Activated CD8-positive, alpha-beta T cell treated with anti-CD3 and anti-CD28 coated beads, Interleukin-2, amount 10 ng/mL, durations not matched to agents 7 days and 5 days (primary cell): ENCODE measurements at regions of chr6 and their contacts with region 1.

Region 1: GRCh38 chr6:160137989-160138835 is 16.6 kb downstream of the SLC22A1 start:
- DNase-seq: peak; percentile 79
- ATAC-seq: peak; percentile 58
- H3K4me3 Mint-ChIP-seq: no peak overlapping the region
- H3K27ac Mint-ChIP-seq: no peak overlapping the region
- H3K4me1 Mint-ChIP-seq: peaks cover 5% of the 10 kb centered on the region
- H3K27me3 Mint-ChIP-seq: peaks cover 2% of the 10 kb centered on the region

Region 2: GRCh38 chr6:160095146-160095845 is 42.9 kb before region 1 on chr6:
- CTCF ChIA-PET with region 1: no interaction called
- POLR2A ChIA-PET with region 1: no interaction called
- DNase-seq: no peak
- ATAC-seq: no peak
- H3K4me3 Mint-ChIP-seq: no peak overlapping the region
- H3K27ac Mint-ChIP-seq: no peak overlapping the region
- H3K4me1 Mint-ChIP-seq: peaks cover 15% of the 10 kb centered on the region
- H3K27me3 Mint-ChIP-seq: no peaks in the 10 kb centered on the region

Region 3: DNA sequence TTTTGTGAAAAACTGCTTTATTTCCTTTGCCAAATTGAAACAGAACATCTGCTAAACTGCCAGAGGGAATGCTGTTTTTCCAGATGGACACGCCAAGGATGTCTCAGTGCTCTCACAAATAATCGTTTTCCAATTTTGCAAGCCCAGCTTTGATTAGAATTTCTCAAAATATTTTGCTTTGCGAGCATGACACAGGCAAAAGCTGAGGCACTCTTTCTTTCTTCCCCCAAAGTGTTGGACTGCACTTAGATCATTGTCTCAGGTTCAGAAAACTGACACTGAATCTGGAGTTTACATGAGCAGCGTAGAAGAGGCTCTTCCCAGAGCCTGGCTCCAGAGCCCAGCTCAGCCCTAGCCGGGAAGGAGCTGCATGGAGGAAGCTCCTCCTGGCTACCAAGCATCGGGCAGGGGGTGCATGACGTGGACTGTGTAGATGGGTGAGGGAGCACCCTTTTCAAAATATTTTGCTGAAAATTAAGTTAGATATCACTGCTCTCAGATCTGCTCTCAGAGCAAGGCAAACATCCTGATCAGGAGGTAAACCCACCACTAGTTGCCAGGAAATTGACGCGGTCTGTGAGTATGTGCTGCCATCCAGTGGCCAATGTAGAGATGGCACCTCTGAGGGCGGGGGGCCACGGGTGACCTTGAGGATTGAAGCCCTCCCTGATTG is 317.5 kb after region 1 on chr6:
- CTCF ChIA-PET with region 1: interaction called, 29 read pairs
- POLR2A ChIA-PET with region 1: no interaction called
- DNase-seq: peak; percentile 80
- ATAC-seq: peak; percentile 83
- H3K4me3 Mint-ChIP-seq: no peak overlapping the region
- H3K27ac Mint-ChIP-seq: no peak overlapping the region
- H3K4me1 Mint-ChIP-seq: peaks cover 34% of the 10 kb centered on the region
- H3K27me3 Mint-ChIP-seq: peaks cover 22% of the 10 kb centered on the region